ENCODE measurements at regions of chr17 and their contacts with region 1.

Region 1: GRCh38 chr17:32253117-32253611 is 12.5 kb upstream of the RHBDL3 start:
- DNase-seq: peak; percentile 73 to 93 (median 87)
- ATAC-seq: peak; percentile 90
- H3K4me3 ChIP-seq: no peak overlapping the region
- H3K27ac ChIP-seq: no peak overlapping the region
- H3K4me1 ChIP-seq: no peaks in the 10 kb centered on the region
- H3K27me3 ChIP-seq: no peaks in the 10 kb centered on the region

Region 2: DNA sequence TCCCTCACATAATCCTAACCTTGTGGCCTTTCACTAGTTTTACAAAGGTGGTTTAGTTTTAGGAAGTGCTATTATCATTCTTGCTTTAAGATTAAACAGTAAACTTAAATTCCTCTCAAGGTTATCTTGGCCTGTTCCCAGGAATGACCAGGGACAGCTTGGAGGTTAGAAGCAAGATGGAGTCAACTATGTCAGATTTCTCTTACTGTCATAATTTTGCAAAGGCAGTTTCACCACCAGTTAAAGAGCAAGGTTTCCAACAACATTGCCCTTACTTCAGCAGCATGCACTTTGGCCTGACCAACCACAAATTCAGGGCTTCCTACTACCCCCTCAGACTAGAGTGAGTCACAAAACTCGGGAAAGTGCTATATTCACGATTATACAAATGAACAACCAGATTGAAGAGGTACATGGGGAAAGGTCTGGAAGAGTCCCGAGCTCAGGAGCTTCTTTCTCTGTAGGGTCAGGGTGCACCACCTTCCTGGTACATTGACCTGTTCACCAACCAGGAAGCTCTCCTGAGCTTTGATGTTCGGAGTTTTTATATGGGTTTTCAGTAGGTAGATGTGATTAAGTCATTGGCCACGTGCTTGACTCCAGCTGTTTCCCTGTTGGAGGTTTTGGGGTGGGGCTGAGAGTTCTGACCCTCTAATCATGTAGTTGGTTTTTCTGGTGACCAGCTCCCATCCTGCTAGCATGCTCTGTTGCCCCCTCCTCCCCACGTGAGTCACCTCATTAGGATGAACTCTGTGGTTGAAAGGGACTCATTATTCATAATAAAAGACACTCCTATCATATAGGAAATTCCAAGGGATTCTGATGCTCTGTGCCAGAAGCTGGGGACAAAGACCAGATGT is 91.4 kb before region 1 on chr17:
- intact Hi-C with region 1: no loop called
- DNase-seq: no peak
- ATAC-seq: no peak
- H3K4me3 ChIP-seq: no peak overlapping the region
- H3K27ac ChIP-seq: no peak overlapping the region
- H3K4me1 ChIP-seq: no peaks in the 10 kb centered on the region
- H3K27me3 ChIP-seq: no peaks in the 10 kb centered on the region

Region 3: DNA sequence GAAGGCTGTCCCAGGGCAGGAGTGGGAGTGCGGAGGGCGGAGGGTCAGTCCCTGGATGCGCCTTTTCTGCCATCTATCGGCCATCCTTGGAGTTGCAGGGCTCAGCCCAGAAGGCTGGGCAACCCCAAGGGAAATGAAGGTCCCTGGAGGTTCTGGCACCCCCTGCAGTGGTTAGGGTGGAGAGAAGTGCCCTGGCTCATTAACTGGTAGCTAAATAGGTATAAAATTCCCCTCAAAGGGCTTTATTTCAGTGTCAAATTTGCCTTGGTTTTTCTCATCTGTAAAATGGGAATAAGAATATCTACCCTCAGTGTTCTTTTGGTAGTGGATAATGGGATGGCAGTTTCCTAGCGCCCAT is 66.4 kb after region 1 on chr17:
- intact Hi-C with region 1: loop called (anchors 2 to 5 kb)
- DNase-seq: peak; percentile 73 to 92 (median 87)
- ATAC-seq: peak; percentile 86 to 88
- H3K4me3 ChIP-seq: no peak overlapping the region
- H3K27ac ChIP-seq: no peak overlapping the region
- H3K4me1 ChIP-seq: no peaks in the 10 kb centered on the region
- H3K27me3 ChIP-seq: peaks cover 3% of the 10 kb centered on the region